PC-3 (cell line): ENCODE measurements at regions of chr15 and their contacts with region 1.

Region 1: GRCh38 chr15:42065033-42065432 is 29.3 kb downstream of the PLA2G4D start:
- DNase-seq: peak; percentile 51
- ATAC-seq: peak; percentile 68
- H3K4me3 ChIP-seq: no peak overlapping the region
- H3K27ac ChIP-seq: no peak overlapping the region
- H3K4me1 ChIP-seq: peaks cover 17% of the 10 kb centered on the region; the same call in 1 of the 2 replicates
- H3K27me3 ChIP-seq: no peaks in the 10 kb centered on the region
- CTCF ChIP-seq: no peak

Region 2: DNA sequence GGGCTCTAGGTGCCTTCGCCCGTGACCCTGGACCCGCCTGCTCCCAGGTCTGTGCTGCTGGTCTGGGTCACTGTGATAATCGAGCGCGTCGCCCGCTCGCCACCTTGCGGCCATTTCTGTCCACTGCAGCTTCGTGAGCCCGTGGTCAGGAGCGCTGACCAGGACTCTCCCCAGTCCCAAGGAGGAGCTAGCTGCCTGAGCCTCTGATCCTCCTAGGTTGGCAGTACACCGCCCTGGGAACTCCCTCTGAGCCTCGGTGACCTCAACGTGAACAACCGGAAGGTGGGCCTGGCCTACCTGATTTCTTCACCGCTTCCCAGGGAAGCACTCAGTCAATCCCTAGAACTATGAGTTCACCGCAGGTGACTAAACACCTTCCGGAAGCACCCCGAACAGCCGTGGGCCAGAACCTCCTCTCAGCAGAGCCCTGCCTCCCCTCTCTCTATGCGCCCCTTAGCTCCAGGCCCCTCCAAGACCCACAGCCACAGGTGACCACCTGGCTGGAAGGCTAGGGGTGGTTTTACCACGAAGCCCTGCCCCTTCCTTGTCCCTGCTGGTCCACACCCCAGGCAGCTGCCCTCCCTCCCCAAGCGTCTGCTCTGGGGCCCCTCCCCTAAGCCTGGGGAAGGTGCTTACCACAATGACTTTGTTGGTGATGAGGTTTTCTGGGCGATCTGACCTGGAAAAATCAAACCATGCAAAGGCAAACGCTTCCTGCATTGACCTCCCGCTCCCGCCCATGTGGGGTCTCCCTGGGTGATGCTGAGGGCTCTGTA is 19.6 kb after region 1 on chr15:
- CTCF ChIA-PET with region 1: interaction called, 3 read pairs
- POLR2A ChIA-PET with region 1: no interaction called
- intact Hi-C with region 1: loop called (anchors 1 kb)
- DNase-seq: peak; percentile 95
- ATAC-seq: peak; percentile 91
- H3K4me3 ChIP-seq: peak overlapping the region; percentile 46
- H3K27ac ChIP-seq: peak overlapping the region; percentile 89
- H3K4me1 ChIP-seq: peaks cover 32% of the 10 kb centered on the region
- H3K27me3 ChIP-seq: no peaks in the 10 kb centered on the region
- CTCF ChIP-seq: peak; percentile 95

Region 3: GRCh38 chr15:42137431-42138261 is 72.6 kb after region 1 on chr15:
- CTCF ChIA-PET with region 1: no interaction called
- POLR2A ChIA-PET with region 1: interaction called, 11 read pairs
- intact Hi-C with region 1: loop called (anchors 1 kb)
- DNase-seq: peak; percentile 81
- ATAC-seq: peak; percentile 50
- H3K4me3 ChIP-seq: no peak overlapping the region
- H3K27ac ChIP-seq: no peak overlapping the region
- H3K4me1 ChIP-seq: peaks cover 17% of the 10 kb centered on the region
- H3K27me3 ChIP-seq: no peaks in the 10 kb centered on the region
- CTCF ChIP-seq: peak; percentile 88

Region 4: GRCh38 chr15:42371125-42371524 is 306.1 kb after region 1 on chr15:
- CTCF ChIA-PET with region 1: no interaction called
- POLR2A ChIA-PET with region 1: no interaction called
- intact Hi-C with region 1: loop called (anchors 5 kb)
- DNase-seq: peak; percentile 69
- ATAC-seq: peak; percentile 87
- H3K4me3 ChIP-seq: no peak overlapping the region
- H3K27ac ChIP-seq: peak overlapping the region; percentile 41
- H3K4me1 ChIP-seq: 0 out of 2 replicates have a peak, but pooled peaks cover 8% of the 10 kb centered on the region
- H3K27me3 ChIP-seq: no peaks in the 10 kb centered on the region
- CTCF ChIP-seq: peak; percentile 68

Region 5: GRCh38 chr15:42474827-42475226 is 409.8 kb after region 1 on chr15:
- CTCF ChIA-PET with region 1: no interaction called
- POLR2A ChIA-PET with region 1: no interaction called
- intact Hi-C with region 1: loop called (anchors 2 kb)
- DNase-seq: no peak
- ATAC-seq: no peak
- H3K4me3 ChIP-seq: no peak overlapping the region
- H3K27ac ChIP-seq: no peak overlapping the region
- H3K4me1 ChIP-seq: no peaks in the 10 kb centered on the region
- H3K27me3 ChIP-seq: no peaks in the 10 kb centered on the region
- CTCF ChIP-seq: no peak